ENCODE measurements at regions of chr1 and their contacts with region 1.

Region 1: GRCh38 chr1:111507411-111508201 is 4.2 kb upstream of the ADORA3 start:
- DNase-seq: peak; percentile 90
- ATAC-seq: peak; percentile 70
- H3K4me3 ChIP-seq: peak overlapping the region; percentile 12 to 62 (median 59)
- H3K4me3 Mint-ChIP-seq: peak overlapping the region; percentile 79
- H3K27ac ChIP-seq: peak overlapping the region; percentile 88 to 98
- H3K27ac Mint-ChIP-seq: peak overlapping the region; percentile 95
- H3K4me1 ChIP-seq: peaks cover 64 to 69% of the 10 kb centered on the region in 2 donors
- H3K4me1 Mint-ChIP-seq: peaks cover 57% of the 10 kb centered on the region
- H3K27me3 ChIP-seq: no peaks in the 10 kb centered on the region
- H3K27me3 Mint-ChIP-seq: no peaks in the 10 kb centered on the region
- CTCF ChIP-seq: no peak

Region 2: GRCh38 chr1:111441573-111442192 is 65.9 kb before region 1 on chr1:
- CTCF ChIA-PET with region 1: interaction called, 22 read pairs
- POLR2A ChIA-PET with region 1: no interaction called
- intact Hi-C with region 1: no loop called
- DNase-seq: peak; percentile 79
- ATAC-seq: peak; percentile 92
- H3K4me3 ChIP-seq: no peak overlapping the region
- H3K4me3 Mint-ChIP-seq: no peak overlapping the region
- H3K27ac ChIP-seq: peak overlapping the region in 1 of 2 donors; percentile 39
- H3K27ac Mint-ChIP-seq: peak overlapping the region; percentile 27
- H3K4me1 ChIP-seq: peaks cover 0 to 4% of the 10 kb centered on the region in 2 donors
- H3K4me1 Mint-ChIP-seq: peaks cover 16% of the 10 kb centered on the region
- H3K27me3 ChIP-seq: no peaks in the 10 kb centered on the region
- H3K27me3 Mint-ChIP-seq: no peaks in the 10 kb centered on the region
- CTCF ChIP-seq: peak; percentile 84

Region 3: DNA sequence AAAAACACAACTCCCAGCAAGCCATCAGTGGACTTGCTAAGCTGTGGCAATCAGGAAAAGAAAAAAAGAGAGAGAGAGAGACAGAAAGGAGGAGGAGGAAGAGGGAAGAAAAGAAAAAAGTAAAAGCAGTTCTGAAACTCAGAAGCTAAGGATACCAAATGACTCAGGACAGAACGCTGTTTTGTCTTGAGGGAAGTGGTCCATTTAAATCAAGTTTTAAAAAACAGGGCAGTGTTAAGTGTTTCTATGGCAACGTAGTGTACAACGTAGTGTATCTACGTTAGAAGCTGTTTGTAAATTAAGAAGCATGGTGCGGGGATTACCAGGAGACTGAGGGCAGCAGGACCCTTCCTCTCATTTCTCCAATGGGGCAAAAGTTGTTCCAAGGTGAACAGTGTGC is 10.0 kb before region 1 on chr1:
- CTCF ChIA-PET with region 1: interaction called, 22 read pairs
- POLR2A ChIA-PET with region 1: interaction called, 4 read pairs
- intact Hi-C with region 1: no loop called
- DNase-seq: peak; percentile 33
- ATAC-seq: no peak
- H3K4me3 ChIP-seq: no peak overlapping the region
- H3K4me3 Mint-ChIP-seq: no peak overlapping the region
- H3K27ac ChIP-seq: no peak overlapping the region
- H3K27ac Mint-ChIP-seq: peak overlapping the region; percentile 71
- H3K4me1 ChIP-seq: peaks cover 6 to 11% of the 10 kb centered on the region in 2 donors
- H3K4me1 Mint-ChIP-seq: peaks cover 14% of the 10 kb centered on the region
- H3K27me3 ChIP-seq: no peaks in the 10 kb centered on the region
- H3K27me3 Mint-ChIP-seq: no peaks in the 10 kb centered on the region
- CTCF ChIP-seq: no peak

Region 4: DNA sequence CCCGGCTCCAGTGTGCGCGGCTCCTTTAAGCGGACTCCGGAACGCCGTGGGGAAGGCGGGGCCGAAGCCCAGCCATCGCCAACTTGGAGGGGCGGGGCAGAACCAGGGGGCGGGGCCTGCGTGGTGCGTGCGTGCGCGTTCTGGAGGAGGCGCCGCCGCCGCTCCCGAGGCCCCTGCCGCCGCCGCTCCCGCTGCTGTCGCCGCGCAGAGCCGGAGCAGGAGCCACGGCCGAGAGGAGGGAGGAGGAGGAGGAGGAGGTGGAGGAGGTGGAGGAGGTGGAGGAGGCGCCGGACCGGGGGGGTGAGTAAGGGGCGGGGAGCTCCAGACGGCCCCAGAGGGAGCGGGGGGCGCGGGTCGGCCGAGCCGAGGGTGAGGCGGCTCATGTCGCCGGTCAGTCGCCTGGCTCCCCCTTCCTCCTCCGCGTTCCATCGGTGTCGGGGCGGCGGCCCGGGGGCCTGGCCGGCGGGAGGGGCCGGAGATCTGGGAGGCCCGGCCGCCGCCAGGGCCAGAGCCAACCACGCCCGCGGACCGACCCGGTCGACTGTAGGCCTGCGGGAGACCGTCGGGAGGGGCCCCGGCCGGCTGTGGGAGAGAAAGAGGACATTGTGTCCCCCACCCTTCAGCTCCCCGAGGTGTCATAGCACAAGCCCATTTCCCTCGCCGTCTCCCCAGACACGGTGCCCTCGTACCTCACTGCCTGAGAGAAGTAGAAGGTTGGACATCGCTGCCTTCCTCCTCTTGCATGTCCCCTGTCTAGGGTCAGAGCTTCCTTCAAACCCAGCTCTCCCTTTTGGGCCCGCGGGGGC is 112.2 kb after region 1 on chr1 and contains the start of gene RAP1A:
- CTCF ChIA-PET with region 1: interaction called, 48 read pairs
- POLR2A ChIA-PET with region 1: interaction called, 6 read pairs
- intact Hi-C with region 1: loop called (anchors 1 kb)
- DNase-seq: peak; percentile 91
- ATAC-seq: peak; percentile 79
- H3K4me3 ChIP-seq: peak within 1 kb of the TSS; percentile 63 to 94 (median 78)
- H3K4me3 Mint-ChIP-seq: peak within 1 kb of the TSS; percentile 98
- H3K27ac ChIP-seq: peak within 1 kb of the TSS; percentile 73 to 86
- H3K27ac Mint-ChIP-seq: peak within 1 kb of the TSS; percentile 94
- H3K4me1 ChIP-seq: peaks cover 73 to 79% of the 10 kb centered on the region in 2 donors
- H3K4me1 Mint-ChIP-seq: peaks cover 75% of the 10 kb centered on the region
- H3K27me3 ChIP-seq: no peaks in the 10 kb centered on the region
- H3K27me3 Mint-ChIP-seq: no peaks in the 10 kb centered on the region
- CTCF ChIP-seq: no peak
- total RNA-seq, gene RAP1A: 74.6 and 75.3 TPM in 2 replicates

Region 5: GRCh38 chr1:111690306-111690617 is 182.7 kb after region 1 on chr1:
- CTCF ChIA-PET with region 1: interaction called, 21 read pairs
- POLR2A ChIA-PET with region 1: interaction called, 5 read pairs
- intact Hi-C with region 1: no loop called
- DNase-seq: no peak
- ATAC-seq: no peak
- H3K4me3 ChIP-seq: no peak overlapping the region
- H3K4me3 Mint-ChIP-seq: no peak overlapping the region
- H3K27ac ChIP-seq: peak overlapping the region; percentile 15 to 71
- H3K27ac Mint-ChIP-seq: peak overlapping the region; percentile 54
- H3K4me1 ChIP-seq: peaks cover 16 to 20% of the 10 kb centered on the region in 2 donors
- H3K4me1 Mint-ChIP-seq: peaks cover 59% of the 10 kb centered on the region
- H3K27me3 ChIP-seq: no peaks in the 10 kb centered on the region
- H3K27me3 Mint-ChIP-seq: no peaks in the 10 kb centered on the region
- CTCF ChIP-seq: no peak

Region 6: DNA sequence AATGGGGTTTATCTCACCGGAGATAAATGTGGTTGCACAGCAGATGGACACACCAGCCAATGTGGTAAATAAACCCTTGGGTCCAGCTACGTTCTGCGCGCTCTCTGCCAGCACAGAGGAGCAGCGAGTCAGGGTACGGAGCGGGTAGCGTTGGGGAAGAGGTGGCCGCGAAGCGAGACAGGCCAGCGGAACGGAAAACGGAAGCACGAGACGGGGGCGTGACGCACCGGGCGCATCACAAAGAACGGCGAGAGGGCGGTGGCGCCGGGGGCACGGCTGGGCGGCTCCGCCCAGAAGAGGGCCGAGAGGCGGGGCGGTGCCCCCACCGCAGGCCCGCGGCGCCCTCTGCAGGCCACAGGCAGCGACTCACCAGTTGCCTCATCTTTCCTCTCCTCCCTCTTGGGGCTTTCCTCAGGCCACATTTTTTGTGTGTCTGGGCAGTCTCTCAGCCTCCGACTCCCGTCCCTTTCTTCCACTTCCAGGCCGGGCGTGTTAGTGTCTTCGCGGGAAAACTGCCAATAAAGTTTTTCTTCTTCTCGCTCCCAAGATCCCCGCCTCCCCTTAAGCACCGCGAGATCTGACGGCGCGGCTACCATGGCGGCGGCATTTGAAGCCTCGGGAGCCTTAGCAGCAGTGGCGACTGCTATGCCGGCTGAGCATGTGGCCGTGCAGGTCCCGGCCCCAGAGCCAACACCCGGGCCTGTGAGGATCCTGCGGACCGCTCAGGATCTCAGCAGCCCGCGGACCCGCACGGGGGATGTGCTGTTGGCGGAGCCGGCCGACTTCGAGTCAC is 247.9 kb after region 1 on chr1 and contains the start of gene DDX20:
- CTCF ChIA-PET with region 1: interaction called, 26 read pairs
- POLR2A ChIA-PET with region 1: interaction called, 5 read pairs
- intact Hi-C with region 1: loop called (anchors 1 kb)
- DNase-seq: peak; percentile 98
- ATAC-seq: peak; percentile 92
- H3K4me3 ChIP-seq: peak within 1 kb of the TSS; percentile 62 to 95 (median 74)
- H3K4me3 Mint-ChIP-seq: peak within 1 kb of the TSS; percentile 88
- H3K27ac ChIP-seq: peak within 1 kb of the TSS; percentile 91 to 96
- H3K27ac Mint-ChIP-seq: peak within 1 kb of the TSS; percentile 94
- H3K4me1 ChIP-seq: peaks cover 14 to 16% of the 10 kb centered on the region in 2 donors
- H3K4me1 Mint-ChIP-seq: peaks cover 31% of the 10 kb centered on the region
- H3K27me3 ChIP-seq: no peaks in the 10 kb centered on the region
- H3K27me3 Mint-ChIP-seq: no peaks in the 10 kb centered on the region
- CTCF ChIP-seq: peak; percentile 95
- total RNA-seq, gene DDX20: 22.3 and 24.6 TPM in 2 replicates